HEK293 (cell line): ENCODE measurements at regions of chr1 and their contacts with region 1.

Region 1: DNA sequence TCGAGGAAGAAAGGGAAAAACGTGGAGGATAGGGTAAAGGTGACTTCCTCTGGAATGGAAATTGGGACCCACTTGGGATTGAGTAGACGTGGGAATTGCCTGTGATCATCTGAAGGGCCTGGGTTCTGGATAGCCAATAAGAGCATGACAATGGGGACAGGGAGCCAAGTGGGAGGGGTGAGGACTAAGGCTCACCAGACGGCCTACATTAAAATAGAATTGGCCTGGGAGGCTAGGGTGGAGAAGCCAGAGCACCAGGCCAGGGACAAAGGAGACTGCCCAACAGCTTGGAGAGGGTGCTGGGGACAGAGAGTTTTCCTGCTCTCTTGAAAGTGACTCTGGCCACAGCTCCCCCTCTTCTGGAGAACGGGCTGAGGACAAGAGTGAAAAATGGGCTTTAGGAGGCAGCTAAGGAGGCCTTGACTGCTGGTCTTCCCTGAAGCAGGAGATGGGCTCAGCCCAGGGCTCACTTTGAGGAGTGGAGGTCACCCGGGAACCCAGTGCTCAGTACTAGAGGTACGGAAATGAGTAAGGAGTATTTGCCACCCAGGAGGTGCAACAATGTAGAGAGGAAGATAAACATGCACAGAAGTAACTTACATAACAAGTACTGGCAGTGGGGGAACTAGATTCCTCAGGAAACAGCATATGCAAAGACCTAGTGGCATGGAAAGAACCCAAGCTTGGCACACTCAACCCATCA is 18.8 kb downstream of the INKA2 start:
- H3K4me3 ChIP-seq: no peak overlapping the region
- H3K27ac ChIP-seq: no peak overlapping the region
- H3K4me1 ChIP-seq: no peaks in the 10 kb centered on the region
- CTCF ChIP-seq: no peak

Region 2: DNA sequence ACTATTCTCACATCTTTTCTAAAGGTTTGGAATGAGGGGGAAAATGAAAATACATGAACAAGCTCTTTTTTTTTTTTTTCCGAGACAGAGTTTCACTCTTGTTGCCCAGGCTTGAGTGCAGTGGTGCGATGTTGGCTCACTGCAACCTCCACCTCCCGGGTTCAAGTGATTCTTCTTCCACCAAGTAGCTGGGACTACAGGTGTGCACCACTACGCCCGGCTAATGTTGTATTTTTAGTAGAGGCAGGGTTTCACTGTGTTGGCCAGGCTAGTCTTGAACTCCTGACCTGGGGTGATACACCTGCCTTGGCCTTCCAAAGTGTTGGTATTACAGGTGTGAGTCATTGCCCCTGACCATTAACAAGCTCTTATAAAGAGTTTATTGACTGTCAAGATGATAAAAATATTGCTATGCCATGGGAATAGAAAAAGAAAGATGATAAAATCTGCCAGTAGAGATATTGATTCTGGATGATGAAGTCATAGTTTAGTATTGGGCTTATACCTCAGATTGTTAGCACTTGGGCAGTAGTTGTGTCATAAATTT is 17.8 kb before region 1 on chr1:
- CTCF ChIA-PET with region 1: interaction called, 16 read pairs
- POLR2A ChIA-PET with region 1: no interaction called
- H3K4me3 ChIP-seq: no peak overlapping the region
- H3K27ac ChIP-seq: no peak overlapping the region
- H3K4me1 ChIP-seq: no peaks in the 10 kb centered on the region
- CTCF ChIP-seq: no peak

Region 3: GRCh38 chr1:111739194-111739924 is 18.9 kb after region 1 on chr1 and contains the start of gene INKA2:
- CTCF ChIA-PET with region 1: interaction called, 69 read pairs
- POLR2A ChIA-PET with region 1: interaction called, 7 read pairs
- H3K4me3 ChIP-seq: peak within 1 kb of the TSS; percentile 57
- H3K27ac ChIP-seq: peak within 1 kb of the TSS; percentile 92
- H3K4me1 ChIP-seq: peaks cover 21% of the 10 kb centered on the region
- CTCF ChIP-seq: peak; percentile 27; the same call in 1 of the 2 replicates

Region 4: GRCh38 chr1:111747282-111747734 is 26.9 kb after region 1 on chr1:
- CTCF ChIA-PET with region 1: interaction called, 69 read pairs
- POLR2A ChIA-PET with region 1: no interaction called
- H3K4me3 ChIP-seq: no peak overlapping the region
- H3K27ac ChIP-seq: no peak overlapping the region
- H3K4me1 ChIP-seq: no peaks in the 10 kb centered on the region
- CTCF ChIP-seq: peak; percentile 77

Region 5: GRCh38 chr1:111755331-111756123 is 35.1 kb after region 1 on chr1 and contains the start of gene DDX20:
- CTCF ChIA-PET with region 1: interaction called, 29 read pairs
- POLR2A ChIA-PET with region 1: no interaction called
- H3K4me3 ChIP-seq: peak within 1 kb of the TSS; percentile 91
- H3K27ac ChIP-seq: peak within 1 kb of the TSS; percentile 72
- H3K4me1 ChIP-seq: peaks cover 4% of the 10 kb centered on the region; the same call in 1 of the 2 replicates
- CTCF ChIP-seq: peak; percentile 97

Region 6: DNA sequence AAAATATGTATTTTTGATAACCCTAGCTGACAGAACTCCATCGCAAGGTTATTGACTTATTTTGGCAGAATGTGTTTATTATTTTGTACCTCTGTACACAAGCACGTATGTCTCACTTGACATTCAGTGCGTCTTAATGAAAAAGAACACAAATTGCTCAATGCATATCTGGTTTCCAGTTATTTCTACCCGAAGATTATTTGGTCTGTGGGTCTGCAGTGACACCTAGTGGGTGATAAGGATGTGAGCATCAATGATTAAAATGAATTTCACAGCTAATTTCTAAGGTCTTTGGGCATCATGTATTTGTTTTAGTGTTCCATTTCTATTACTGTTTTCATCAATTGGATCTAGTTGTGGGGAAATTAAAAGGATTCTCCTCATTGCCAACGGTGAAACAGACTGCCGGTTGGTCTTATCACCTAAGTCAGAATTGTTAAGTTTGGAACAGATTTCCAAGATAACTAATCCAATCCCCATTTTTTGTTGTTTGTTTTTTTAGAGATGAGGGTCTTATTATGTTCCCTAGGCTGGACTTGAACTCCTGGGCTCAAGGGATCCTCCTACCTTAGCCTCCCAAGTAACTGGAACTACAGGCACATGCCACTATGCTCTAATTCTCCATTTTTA is 49.2 kb after region 1 on chr1:
- CTCF ChIA-PET with region 1: interaction called, 83 read pairs
- POLR2A ChIA-PET with region 1: no interaction called
- H3K4me3 ChIP-seq: no peak overlapping the region
- H3K27ac ChIP-seq: no peak overlapping the region
- H3K4me1 ChIP-seq: no peaks in the 10 kb centered on the region
- CTCF ChIP-seq: peak; percentile 54